ENCODE measurements at regions of chr6 and their contacts with region 1.

Region 1: DNA sequence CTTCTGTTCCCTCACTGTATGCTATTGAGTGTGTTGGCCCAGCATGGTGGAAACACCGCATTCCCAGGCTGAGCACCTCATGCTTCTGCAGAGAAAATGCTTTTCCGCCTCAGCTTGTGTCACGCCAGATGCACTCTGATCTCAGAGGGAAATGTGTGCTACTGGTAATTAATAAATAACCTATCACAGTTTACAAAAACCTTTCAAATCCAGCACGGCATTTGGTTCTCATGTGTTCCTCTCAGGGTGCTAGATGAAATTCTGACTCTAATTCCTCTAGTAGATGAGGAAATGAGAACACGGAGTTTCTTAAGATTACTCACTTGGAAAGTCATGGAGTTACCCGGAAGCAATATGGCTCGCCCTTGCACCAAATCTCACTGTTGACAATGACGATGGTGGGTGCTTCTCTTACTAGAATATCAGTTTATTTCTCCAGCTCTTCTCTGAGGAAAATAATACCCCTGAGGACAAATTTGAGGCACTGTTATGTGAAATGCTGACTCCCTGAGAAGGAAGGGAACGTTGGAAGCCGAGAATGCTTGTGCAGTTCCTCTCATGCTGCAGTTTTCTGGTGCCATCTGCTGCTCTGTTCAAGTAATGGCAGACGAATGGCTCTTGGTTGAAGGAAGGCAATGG is 116.6 kb downstream of the RNF144B start:
- DNase-seq: peak; percentile 74
- H3K4me3 Mint-ChIP-seq: no peak overlapping the region
- H3K27ac Mint-ChIP-seq: no peak overlapping the region
- H3K4me1 Mint-ChIP-seq: peaks cover 1% of the 10 kb centered on the region
- H3K27me3 Mint-ChIP-seq: peaks cover 13% of the 10 kb centered on the region

Region 2: DNA sequence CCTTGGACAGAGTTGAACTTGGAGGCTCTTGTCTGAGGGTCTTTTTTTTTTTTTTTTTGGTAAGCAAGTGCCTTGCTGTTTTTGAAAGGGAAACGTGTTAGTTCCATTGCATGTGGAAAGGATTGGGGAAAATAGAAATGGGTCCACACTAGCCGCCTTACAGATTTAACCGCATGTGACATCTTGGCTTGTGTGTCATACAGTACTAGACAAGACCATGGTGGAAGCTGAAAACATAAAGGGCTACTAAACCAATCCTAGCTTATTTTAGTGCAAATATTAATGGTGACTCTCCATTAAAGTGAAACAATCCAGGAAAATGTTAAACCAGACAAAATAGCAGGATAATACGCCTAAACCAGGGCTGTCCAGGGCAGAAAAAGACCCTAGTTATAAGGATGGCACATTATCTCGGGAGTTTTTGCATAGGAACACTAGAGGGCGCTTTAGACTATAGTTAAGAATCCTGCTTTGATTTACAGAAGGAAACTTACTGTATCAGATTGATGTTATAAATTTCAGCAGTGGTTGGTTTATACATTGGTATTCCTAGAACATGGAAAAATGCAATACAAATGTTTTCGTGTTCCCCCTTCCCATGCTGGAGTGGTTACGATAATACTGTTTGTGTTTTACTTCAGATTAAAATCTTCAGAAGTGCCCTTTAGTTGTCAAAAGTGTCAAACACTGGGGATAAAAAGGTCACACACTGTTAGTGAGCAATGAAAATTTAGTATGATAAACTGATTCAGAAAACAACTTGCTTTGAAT is 179.6 kb before region 1 on chr6:
- intact Hi-C with region 1: loop called (anchors 1 kb)
- DNase-seq: peak; percentile 70
- H3K4me3 Mint-ChIP-seq: no peak overlapping the region
- H3K27ac Mint-ChIP-seq: no peak overlapping the region
- H3K4me1 Mint-ChIP-seq: no peaks in the 10 kb centered on the region
- H3K27me3 Mint-ChIP-seq: peaks cover 4% of the 10 kb centered on the region

Region 3: GRCh38 chr6:18392346-18392884 is 111.3 kb before region 1 on chr6:
- intact Hi-C with region 1: loop called (anchors 10 kb)
- DNase-seq: no peak
- H3K4me3 Mint-ChIP-seq: no peak overlapping the region
- H3K27ac Mint-ChIP-seq: no peak overlapping the region
- H3K4me1 Mint-ChIP-seq: peaks cover 11% of the 10 kb centered on the region
- H3K27me3 Mint-ChIP-seq: peaks cover 23% of the 10 kb centered on the region

Measured in activated CD4-positive, alpha-beta T cell treated with anti-CD3 and anti-CD28 coated beads, Interleukin-2, amount 10 ng/mL, durations not matched to agents 24 days and 14 days (primary cell).